ENCODE measurements at regions of chr14 and their contacts with region 1.

Region 1: GRCh38 chr14:105414456-105415371 is 4.9 kb upstream of the MTA1 start:
- DNase-seq: peak; percentile 85
- CTCF ChIP-seq: peak; percentile 69

Region 2: DNA sequence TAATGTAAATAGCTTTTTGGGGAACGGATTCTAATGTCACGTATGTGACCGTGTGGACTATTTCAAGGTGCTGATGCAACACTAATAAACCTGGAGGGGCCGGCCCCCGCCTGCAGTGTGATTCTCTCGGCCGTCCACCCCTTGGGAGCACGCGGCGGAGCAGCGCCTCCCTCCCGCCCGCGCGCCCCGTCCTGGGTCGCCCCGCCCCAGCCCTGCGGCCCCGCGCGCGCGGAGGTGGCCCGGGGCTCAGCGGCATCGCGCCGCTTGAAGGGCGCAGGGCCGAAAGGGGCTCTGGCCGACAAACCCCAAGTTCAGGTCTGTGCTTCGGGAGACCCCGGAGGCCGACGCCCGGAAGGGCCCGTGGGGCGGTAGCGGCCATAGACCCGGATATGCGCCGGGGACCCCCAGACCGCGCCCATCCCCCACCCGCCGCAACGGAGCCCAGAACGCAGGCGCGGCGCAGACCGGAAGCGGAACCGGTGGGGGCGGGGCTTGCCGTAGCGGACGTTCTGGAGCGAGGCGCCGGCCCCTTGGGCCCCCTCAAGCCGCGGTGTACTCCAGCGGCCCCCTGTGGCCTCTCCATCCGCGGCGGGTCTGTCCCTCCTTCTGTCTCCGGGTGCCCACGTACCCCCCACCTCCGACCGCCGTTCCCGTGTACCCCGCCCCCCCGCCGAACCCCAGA is 16.5 kb before region 1 on chr14 and contains the start of gene TEX22:
- CTCF ChIA-PET with region 1: interaction called, 13 read pairs
- POLR2A ChIA-PET with region 1: no interaction called
- DNase-seq: peak; percentile 96
- CTCF ChIP-seq: peak; percentile 23